PC-9 (cell line): ENCODE measurements at regions of chr14 and their contacts with region 1.

Region 1: GRCh38 chr14:67571272-67571850 is 28.7 kb downstream of the PIGH start:
- DNase-seq: peak; percentile 40 to 60
- H3K4me3 ChIP-seq: no peak overlapping the region
- H3K27ac ChIP-seq: no peak overlapping the region
- H3K4me1 ChIP-seq: peaks cover 8% of the 10 kb centered on the region; the same call in 1 of the 2 replicates
- H3K27me3 ChIP-seq: no peaks in the 10 kb centered on the region
- CTCF ChIP-seq: peak; percentile 97

Region 2: DNA sequence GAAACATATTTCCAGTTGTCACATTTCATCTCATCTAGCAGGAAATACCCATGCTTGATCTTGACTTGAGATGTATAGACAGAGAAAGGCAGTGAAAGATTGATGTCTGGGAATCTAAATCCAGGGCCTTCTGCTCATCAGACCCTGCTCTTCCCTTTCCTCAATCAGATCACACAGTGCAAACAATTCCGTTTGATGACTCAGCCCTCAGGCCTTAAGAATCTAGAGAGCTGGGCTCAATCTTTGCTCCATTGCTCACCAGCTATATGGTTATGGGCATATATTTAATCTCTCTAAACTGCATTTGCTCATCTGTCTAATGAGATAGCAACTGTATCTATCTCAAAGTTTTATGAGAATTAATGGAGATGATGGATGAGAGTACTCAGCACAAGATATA is 1287.0 kb before region 1 on chr14:
- CTCF ChIA-PET with region 1: no interaction called
- POLR2A ChIA-PET with region 1: no interaction called
- intact Hi-C with region 1: no loop called
- DNase-seq: no peak
- H3K4me3 ChIP-seq: no peak overlapping the region
- H3K27ac ChIP-seq: no peak overlapping the region
- H3K4me1 ChIP-seq: no peaks in the 10 kb centered on the region
- H3K27me3 ChIP-seq: no peaks in the 10 kb centered on the region
- CTCF ChIP-seq: no peak

Region 3: DNA sequence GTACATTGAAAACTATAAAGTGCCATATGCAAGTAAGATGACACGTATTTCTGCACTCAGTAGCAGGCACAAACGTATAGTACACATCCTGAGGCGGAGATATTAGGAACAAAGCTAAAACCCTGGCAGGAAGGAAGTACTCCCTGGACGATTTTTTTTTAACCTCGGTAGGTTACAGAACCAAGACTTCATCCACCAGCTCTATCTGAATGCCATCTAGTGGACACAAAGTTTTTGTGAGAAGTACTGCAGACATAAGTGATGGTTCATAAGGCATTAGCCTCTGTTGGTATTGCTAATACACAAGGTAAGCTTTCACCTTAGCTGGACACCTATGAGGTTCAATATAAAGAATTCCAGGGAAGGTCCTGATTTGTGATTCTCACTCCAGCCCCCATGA is 1168.2 kb before region 1 on chr14:
- CTCF ChIA-PET with region 1: no interaction called
- POLR2A ChIA-PET with region 1: no interaction called
- intact Hi-C with region 1: loop called (anchors 5 kb)
- DNase-seq: peak in 1 of 2 experiments; percentile 62
- H3K4me3 ChIP-seq: no peak overlapping the region
- H3K27ac ChIP-seq: no peak overlapping the region
- H3K4me1 ChIP-seq: no peaks in the 10 kb centered on the region
- H3K27me3 ChIP-seq: no peaks in the 10 kb centered on the region
- CTCF ChIP-seq: peak; percentile 65

Region 4: DNA sequence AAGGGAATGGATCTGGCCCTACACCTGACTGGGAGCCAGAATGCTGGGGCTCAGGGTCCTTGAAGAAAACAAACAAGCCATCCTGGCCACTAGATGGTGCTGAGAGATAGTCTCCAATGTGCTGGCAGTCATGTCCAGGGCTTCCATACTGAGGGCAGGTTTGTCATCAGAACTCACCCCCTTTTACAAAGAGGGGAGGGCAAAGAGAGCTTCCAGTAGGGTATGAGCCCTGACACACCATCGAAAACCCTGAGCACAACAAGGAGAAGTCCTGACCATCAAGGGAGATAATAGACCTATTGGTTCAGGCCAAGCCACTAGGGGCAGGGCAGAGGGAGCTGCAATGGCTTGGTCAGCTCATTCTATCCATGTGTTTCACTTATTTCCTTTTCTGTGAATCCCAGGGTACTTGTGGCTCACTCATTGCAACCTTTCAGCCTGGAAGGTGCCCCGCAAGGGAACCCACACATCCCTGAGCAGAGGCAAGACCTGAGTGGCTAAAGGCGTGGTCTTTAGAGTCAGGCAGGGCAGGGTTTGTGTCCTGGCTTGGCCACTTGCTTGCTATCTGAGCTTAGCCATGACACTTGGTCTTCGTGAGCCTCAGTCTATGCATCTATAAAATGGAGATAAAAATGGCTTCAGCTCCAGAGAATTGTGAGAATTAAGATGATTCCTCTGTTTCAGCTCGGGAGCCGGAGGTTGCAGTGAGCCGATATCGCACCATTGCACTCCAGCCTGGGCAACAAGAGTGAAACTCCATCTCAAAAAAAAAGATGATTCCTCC is 44.5 kb before region 1 on chr14:
- CTCF ChIA-PET with region 1: interaction called, 22 read pairs
- POLR2A ChIA-PET with region 1: no interaction called
- intact Hi-C with region 1: loop called (anchors 1 kb)
- DNase-seq: peak; percentile 43 to 47
- H3K4me3 ChIP-seq: no peak overlapping the region
- H3K27ac ChIP-seq: no peak overlapping the region
- H3K4me1 ChIP-seq: no peaks in the 10 kb centered on the region
- H3K27me3 ChIP-seq: peaks cover 17% of the 10 kb centered on the region; the same call in 1 of the 2 replicates
- CTCF ChIP-seq: peak; percentile 82